ENCODE measurements at regions of chr13 and their contacts with region 1.

Region 1: GRCh38 chr13:73835138-73835721 is 299.0 kb downstream of the KLF12 start:
- DNase-seq: no peak
- H3K4me3 Mint-ChIP-seq: no peak overlapping the region
- H3K27ac Mint-ChIP-seq: no peak overlapping the region
- H3K4me1 Mint-ChIP-seq: peaks cover 6% of the 10 kb centered on the region
- H3K27me3 Mint-ChIP-seq: no peaks in the 10 kb centered on the region

Region 2: DNA sequence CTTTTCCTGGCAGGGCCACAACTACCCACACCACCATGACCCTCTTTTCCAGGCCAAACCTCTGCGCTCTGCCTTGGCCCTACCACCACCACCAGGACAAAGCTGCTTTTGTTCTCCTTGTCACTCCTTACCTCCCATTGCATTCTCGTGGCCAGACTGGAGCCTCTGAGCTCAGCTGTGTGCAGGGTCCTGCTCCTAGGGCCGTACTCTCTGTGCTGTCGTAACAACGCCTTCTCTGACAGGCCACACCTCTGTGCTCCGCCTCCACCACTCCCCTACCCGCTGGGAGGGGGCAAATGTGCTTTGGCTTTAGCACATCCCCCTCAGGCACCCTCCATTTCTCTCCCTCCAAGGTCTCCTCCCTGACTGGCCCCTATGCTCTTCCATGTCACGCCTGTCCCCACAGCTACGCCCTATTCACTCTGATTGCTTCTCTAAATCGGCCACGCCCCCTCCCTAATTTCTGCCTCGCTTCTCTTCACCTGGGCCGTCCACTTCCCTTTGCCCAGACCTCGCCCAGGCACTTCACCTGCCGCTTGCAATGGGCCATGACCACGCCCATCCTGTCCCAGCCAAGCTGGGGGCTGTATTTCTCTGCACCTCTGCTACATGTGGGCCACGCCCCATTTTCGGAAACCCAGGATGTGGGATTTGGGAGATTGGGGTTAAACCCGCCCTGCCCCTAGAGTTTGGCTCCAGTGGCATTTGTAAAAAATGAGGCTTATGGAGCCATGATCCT is 173.4 kb before region 1 on chr13:
- intact Hi-C with region 1: no loop called
- DNase-seq: no peak
- H3K4me3 Mint-ChIP-seq: no peak overlapping the region
- H3K27ac Mint-ChIP-seq: no peak overlapping the region
- H3K4me1 Mint-ChIP-seq: no peaks in the 10 kb centered on the region
- H3K27me3 Mint-ChIP-seq: peaks cover 6% of the 10 kb centered on the region

Region 3: GRCh38 chr13:73924607-73925006 is 89.4 kb after region 1 on chr13:
- intact Hi-C with region 1: loop called (anchors 5 kb)
- DNase-seq: no peak
- H3K4me3 Mint-ChIP-seq: no peak overlapping the region
- H3K27ac Mint-ChIP-seq: peak overlapping the region; percentile 72
- H3K4me1 Mint-ChIP-seq: peaks cover 58% of the 10 kb centered on the region
- H3K27me3 Mint-ChIP-seq: no peaks in the 10 kb centered on the region

Region 4: DNA sequence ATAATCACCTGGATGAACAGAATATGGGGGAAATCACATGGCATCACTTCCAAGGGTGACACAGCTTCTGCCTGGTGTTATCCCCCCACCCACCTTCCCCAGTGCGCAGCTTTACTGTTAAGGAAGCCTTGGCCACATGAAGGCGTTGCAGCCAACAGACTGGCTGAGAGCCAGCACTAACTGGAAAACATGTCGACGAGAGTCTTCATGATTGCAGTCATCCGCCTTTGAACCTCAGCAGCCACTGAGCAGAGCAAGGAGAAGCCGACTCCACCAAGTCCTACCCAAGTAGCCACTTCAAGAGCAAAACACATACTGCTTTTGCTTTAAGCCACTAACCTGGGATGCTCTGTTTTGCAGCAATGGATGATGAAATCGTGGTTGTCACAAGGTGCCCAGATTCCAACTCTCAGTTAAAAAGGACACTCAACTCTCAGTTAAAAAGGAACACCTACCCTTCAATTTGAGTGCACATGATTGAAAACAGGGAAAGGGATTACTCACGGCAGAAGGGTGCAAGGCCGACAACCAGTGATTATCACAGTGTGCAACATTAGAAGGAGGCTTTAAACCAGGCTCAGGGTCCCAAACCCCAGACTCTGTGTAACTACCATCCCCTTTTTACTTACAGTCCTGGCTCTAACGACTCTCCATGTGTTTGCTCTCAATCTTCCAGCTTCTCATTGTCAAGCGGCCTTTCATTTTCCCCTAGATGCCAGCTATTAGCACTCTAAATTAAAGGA is 149.9 kb after region 1 on chr13:
- intact Hi-C with region 1: loop called (anchors 10 kb)
- DNase-seq: peak; percentile 30
- H3K4me3 Mint-ChIP-seq: peak overlapping the region; percentile 65
- H3K27ac Mint-ChIP-seq: peak overlapping the region; percentile 80
- H3K4me1 Mint-ChIP-seq: peaks cover 33% of the 10 kb centered on the region
- H3K27me3 Mint-ChIP-seq: no peaks in the 10 kb centered on the region

Region 5: DNA sequence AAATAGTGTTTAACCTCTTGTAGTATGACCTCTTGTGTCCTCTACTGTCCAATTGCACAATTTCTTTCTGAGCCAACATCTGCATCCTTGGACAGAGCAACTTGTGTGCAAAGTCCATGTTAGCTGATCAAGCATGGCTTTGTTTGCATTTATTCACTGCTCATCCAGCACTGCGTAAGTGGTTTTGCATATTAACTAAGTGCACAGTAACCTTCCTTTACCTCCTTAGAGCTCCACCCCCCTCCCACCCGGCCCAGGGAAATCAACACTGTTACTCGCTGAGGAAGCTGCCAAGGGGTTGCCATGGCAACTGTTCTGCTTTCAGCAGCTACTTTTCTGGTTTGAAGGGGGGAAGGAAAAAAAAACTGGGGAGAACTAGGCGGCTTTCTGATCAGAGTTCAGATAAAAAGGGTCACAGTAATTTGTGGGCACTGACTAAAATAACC is 452.5 kb after region 1 on chr13:
- intact Hi-C with region 1: loop called (anchors 1 kb)
- DNase-seq: peak; percentile 71
- H3K4me3 Mint-ChIP-seq: peak overlapping the region; percentile 15
- H3K27ac Mint-ChIP-seq: peak overlapping the region; percentile 33
- H3K4me1 Mint-ChIP-seq: peaks cover 33% of the 10 kb centered on the region
- H3K27me3 Mint-ChIP-seq: peaks cover 20% of the 10 kb centered on the region

Region 6: DNA sequence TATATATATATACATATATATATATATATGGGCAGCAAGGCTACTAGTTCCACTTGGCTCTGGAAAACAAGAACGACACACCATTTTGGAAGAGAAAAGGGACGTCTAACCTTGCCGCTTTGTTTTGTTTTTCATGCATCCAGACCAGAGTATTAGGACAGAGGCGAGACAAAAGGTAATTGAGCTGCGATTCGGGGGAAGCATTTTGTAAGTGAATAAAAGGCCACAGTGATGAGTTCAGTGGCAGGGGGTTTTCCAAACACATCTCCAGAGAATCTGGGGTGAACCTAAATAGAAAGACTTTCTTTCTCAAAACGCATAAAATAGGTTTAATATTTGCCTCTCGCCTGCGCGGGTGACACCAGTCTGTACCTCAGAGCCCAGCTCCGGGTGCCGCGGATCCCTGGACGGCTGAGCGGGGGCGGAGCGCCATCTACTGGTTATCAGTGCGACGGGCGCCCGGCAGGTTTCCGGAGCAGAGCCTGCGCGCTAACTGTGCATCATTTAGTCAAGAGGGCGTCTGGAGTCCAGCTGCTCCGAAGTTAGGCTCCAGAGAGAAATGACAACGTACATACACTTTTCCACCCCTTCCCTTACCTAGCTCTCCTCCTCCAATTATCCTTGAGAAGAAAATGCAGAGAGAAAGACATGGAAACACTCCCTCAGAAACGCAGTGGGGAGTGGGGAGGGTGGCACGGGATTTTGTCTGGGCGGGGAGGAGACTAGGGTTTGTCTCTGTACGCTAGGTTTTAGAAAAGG is 1384.4 kb after region 1 on chr13:
- intact Hi-C with region 1: loop called (anchors 10 kb)
- DNase-seq: peak; percentile 75
- H3K4me3 Mint-ChIP-seq: peak overlapping the region; percentile 49
- H3K27ac Mint-ChIP-seq: peak overlapping the region; percentile 34
- H3K4me1 Mint-ChIP-seq: peaks cover 6% of the 10 kb centered on the region
- H3K27me3 Mint-ChIP-seq: peaks cover 45% of the 10 kb centered on the region